ENCODE measurements at regions of chr15 and their contacts with region 1.

Region 1: DNA sequence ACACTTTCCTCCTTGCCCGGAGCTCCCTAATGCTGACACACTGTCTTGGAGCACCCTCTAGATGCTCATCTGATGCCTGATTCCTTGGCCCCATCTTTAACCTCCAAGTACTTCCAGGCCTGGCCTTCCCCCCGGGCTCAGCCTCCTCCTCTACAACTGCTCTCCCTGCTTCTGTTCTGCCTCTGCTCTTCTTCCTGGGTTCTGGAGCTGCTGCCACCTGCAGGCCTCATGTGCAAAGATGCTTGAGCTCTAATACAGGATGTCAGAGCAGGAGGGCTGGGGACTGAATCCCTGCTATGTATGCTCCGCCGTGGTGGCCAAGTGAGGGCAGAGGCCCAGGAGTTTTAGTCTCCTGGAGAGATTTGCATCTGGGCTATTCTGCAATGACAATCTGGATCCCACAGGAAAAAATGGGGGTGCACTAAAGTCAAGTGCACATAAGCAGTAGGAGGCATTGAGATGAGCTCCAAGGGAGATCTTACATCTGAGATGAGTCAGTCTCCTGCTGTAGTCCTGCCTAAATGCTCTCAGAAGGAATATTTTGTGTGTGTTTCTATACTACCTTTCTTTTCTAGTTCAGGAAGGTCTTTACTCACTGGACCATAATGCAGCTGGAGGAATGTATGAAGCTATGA is 296.3 kb downstream of the UACA start:
- DNase-seq: no peak
- H3K4me3 ChIP-seq: no peak overlapping the region
- H3K27ac ChIP-seq: no peak overlapping the region
- H3K4me1 ChIP-seq: peaks cover 0 to 4% (median 0%) of the 10 kb centered on the region in 3 donors
- H3K27me3 ChIP-seq: peaks cover 0 to 82% (median 2%) of the 10 kb centered on the region in 4 donors
- CTCF ChIP-seq: peak; percentile 17 to 64 (median 47)
- POLR2A ChIP-seq: no peak

Region 2: DNA sequence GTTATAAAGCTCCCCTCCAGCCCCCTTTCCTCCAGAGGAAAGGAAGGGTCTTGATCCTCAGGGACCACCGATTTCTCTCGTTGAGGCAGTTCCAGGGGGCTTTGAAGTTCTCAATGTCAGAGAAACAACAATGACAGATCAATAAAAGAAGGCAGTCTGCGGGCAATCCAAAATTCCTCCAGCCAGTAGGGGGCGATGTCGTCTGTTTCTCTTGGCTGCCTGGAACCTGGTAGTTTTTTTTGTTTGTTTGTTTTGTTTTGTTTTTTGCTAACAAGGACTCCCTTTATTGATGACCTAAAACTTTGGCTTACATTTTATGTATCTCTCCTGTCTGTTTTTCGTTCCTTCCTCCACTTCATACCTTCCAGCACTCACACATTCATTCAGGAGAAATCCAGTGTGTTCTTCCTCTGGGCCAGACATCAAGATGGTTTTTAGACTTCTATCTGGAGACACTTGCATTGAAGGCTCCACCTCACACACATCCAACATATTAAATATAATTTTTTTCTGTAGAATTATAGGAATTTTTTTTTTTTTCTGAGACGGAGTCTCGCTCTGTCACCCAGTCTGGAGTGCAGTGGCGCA is 737.8 kb before region 1 on chr15:
- intact Hi-C with region 1: loop called (anchors 10 kb)
- DNase-seq: no peak
- H3K4me3 ChIP-seq: no peak overlapping the region
- H3K27ac ChIP-seq: no peak overlapping the region
- H3K4me1 ChIP-seq: peaks cover 0 to 10% (median 0%) of the 10 kb centered on the region in 3 donors
- H3K27me3 ChIP-seq: peaks cover 0 to 18% (median 0%) of the 10 kb centered on the region in 4 donors
- CTCF ChIP-seq: peak; percentile 62 to 77 (median 73)
- POLR2A ChIP-seq: no peak

Region 3: DNA sequence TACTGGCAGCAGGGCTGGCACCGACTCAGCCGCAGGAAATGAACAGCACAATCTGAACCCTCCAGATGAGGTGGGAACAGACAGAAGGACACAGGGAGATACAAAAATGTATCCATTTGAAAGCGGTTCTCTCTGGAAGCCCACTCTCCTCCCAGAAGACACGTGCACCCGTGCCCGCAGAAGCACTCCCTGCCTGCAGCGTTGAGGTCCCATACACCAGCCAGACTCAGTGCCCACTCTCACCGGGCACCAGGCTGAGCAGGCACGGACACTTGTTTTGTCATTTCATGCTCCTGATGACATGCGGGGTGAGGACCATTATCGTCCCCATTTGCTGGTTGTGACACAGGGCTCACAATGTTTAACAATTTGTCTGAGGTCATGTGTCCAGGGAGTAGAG is 71.8 kb before region 1 on chr15:
- intact Hi-C with region 1: no loop called
- DNase-seq: no peak
- H3K4me3 ChIP-seq: no peak overlapping the region
- H3K27ac ChIP-seq: no peak overlapping the region
- H3K4me1 ChIP-seq: peaks cover 0 to 6% (median 0%) of the 10 kb centered on the region in 3 donors
- H3K27me3 ChIP-seq: peaks cover 0 to 55% (median 0%) of the 10 kb centered on the region in 4 donors
- CTCF ChIP-seq: no peak
- POLR2A ChIP-seq: no peak

Region 4: DNA sequence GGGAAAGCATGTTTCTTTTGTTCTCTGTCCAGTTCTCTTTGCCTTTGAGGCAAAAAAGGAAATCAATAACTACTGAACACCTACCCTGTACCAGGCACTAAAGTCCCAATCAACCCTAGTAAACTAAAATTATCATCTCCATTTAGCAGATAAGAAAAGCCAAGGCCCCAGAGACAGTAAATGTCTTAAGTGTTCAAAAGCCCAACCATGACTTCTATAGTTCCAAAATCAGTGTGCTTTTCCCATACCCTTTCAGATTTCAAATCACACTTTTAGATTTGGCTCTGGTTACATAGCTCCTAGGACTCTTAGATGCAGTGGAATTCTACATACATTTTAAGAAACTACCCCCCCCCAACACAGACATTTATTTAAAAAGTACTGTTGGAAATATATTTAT is 232.9 kb after region 1 on chr15:
- intact Hi-C with region 1: no loop called
- DNase-seq: no peak
- H3K4me3 ChIP-seq: peak overlapping the region in 1 of 4 donors; percentile 22
- H3K27ac ChIP-seq: peak overlapping the region in 3 of 4 donors; percentile 43 to 70 (median 62)
- H3K4me1 ChIP-seq: peaks cover 0 to 49% (median 11%) of the 10 kb centered on the region in 3 donors
- H3K27me3 ChIP-seq: no peaks in the 10 kb centered on the region
- CTCF ChIP-seq: no peak
- POLR2A ChIP-seq: no peak